ENCODE measurements at regions of chr7 and their contacts with region 1.

Region 1: DNA sequence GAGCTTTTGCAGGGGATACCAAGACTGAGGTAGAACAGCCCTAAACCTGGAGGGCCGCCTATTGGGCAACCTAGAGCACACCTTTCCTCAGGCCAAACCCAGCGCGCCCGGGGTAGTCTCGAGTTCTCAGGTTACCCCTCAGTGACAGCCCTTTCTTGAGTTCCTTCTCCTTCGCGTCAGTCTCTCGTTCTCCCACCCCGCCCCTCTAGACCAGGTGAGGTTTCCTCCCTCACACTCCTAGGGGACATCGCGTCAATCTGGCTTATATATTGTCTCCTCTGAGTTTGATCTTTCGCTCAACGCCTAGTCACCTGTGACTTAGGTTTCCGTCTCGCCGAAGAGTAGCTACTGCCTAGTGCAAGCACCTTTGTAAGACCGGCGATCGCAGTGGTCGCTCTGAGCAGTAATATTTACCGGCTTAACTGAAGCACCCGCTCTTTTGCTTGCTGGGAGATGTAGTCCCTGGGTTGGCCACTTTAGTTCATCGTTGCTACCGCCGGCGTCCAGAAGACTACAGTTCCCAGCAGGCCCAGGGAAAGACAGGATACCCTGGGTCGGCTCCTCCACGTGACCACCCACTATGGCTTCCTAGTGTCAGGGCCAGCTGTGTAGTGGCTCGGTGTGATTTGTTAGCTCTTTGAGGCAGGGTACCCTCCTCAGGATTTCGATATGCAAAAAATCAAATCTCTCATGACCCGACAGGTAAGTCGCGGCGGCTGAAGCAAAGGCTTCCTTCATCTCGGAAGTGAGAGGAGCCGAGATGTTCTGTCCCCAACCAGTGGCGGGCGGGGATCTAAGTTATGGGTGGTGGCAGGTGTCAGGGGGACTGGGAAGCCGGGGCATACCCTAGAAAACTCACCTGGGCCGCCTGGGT is at the start of gene VPS50:
- DNase-seq: peak; percentile 94 to 98 (median 97)
- H3K4me3 ChIP-seq: peak within 1 kb of the TSS; percentile 90 to 98 (median 96)
- H3K27ac ChIP-seq: peak within 1 kb of the TSS; percentile 25 to 70
- H3K4me1 ChIP-seq: peaks cover 9 to 15% (median 14%) of the 10 kb centered on the region in 4 experiments
- H3K27me3 ChIP-seq: no peaks in the 10 kb centered on the region

Region 2: DNA sequence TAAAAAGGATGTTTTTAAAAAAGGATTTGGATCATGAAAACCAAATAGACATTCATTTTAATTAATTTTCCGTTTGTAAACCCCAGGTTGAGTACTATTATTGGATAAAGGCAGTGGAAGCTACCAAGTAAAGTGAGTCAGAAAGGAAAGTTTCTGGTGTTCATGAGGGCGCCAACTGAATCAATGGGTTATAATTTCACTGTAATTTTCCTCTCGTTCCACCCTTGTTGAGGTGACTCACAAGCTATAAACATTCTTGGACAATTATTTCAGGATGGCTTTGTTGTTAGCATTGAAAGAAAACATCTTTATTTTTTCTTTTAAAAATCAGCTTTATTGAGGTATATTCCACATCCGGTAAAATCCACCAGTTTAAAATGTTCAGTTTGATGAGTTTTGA is 636.8 kb before region 1 on chr7:
- CTCF ChIA-PET with region 1: no interaction called
- POLR2A ChIA-PET with region 1: no interaction called
- DNase-seq: no peak
- H3K4me3 ChIP-seq: no peak overlapping the region
- H3K27ac ChIP-seq: no peak overlapping the region
- H3K4me1 ChIP-seq: peaks cover 0 to 7% (median 7%) of the 10 kb centered on the region in 4 experiments
- H3K27me3 ChIP-seq: no peaks in the 10 kb centered on the region

Region 3: DNA sequence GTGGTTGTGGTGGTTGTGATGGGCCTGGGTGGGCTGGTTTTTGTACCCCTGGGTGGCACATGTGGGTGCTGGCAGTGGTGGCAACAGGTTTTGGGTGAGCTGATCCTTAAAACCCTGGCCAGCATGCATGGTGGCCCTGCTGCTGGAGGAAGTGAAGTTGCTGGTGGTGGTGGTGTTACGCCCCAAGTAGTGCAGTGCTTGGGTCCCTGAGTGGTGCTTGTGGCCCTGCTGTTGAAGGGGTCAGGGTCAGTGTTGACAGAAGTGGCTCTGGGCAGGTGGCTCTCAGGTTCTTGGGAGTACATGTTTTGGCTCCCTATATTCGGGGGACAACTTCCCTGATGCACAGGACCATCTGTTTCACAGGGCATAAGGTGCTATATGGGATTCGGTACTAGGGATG is 145.3 kb before region 1 on chr7:
- CTCF ChIA-PET with region 1: no interaction called
- POLR2A ChIA-PET with region 1: no interaction called
- DNase-seq: no peak
- H3K4me3 ChIP-seq: no peak overlapping the region
- H3K27ac ChIP-seq: no peak overlapping the region
- H3K4me1 ChIP-seq: no peaks in the 10 kb centered on the region
- H3K27me3 ChIP-seq: no peaks in the 10 kb centered on the region

Region 4: DNA sequence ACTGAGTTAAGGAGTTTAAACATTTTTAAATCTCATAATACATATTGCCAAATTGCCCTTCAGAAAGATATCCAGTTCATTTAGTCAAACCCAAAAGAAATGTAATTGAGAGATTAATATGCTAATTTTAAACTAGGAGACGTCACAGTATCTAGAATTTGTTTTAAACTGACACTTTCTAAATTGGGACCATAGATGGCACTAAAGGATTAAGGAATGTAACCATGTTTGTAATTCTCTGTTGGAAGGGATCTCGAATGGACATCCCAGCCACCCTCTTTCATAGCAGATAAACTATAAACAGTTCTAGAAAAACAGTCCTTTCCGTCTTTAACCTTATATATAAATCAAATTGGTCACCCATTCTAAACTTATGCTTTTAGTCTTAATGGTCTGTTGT is 53.8 kb before region 1 on chr7:
- CTCF ChIA-PET with region 1: interaction called, 24 read pairs
- POLR2A ChIA-PET with region 1: interaction called, 3 read pairs
- DNase-seq: peak; percentile 43 to 68 (median 63)
- H3K4me3 ChIP-seq: no peak overlapping the region
- H3K27ac ChIP-seq: no peak overlapping the region
- H3K4me1 ChIP-seq: no peaks in the 10 kb centered on the region
- H3K27me3 ChIP-seq: peaks cover 0 to 3% (median 0%) of the 10 kb centered on the region in 5 experiments

Region 5: DNA sequence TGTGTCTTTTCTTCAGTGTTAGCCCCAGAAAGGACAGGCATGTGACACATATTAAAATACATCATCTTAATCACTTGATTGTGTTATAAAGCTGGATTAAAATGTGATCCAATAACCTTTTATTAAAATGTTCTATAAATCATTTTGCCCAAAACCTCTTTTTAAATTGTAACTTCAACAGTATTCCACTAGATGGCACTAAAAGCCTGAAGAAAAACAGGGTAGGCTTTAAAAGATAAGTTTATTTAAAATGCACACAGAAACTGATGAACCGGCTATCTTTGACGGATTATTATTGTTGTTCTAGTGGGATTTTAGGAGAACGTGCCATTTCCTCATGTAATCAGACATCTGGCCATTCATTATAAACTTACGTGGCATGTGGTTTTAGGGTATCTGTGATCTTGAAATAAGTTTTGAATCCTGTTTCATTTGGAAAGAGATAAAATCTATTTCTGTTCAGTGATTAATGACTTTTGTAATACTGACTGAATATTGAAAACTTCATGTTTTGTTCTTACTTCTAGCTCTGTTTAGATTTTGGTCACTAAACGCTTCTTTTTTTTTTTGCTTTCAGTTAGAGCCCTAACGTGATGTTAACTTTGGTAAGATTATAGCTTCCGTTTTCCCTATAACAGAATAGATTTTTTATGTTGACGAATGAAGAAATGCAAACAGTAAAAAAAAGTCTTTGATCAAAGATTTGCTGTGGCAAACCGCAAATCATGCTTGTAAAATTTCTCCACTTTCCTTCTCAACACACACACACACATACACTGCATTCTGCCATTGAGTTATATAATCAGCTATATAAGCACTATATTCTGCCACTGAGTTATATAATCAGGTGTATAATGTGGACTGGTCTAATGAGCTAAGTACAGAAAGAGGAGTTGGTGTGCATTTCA is 13.7 kb after region 1 on chr7:
- CTCF ChIA-PET with region 1: interaction called, 19 read pairs
- POLR2A ChIA-PET with region 1: no interaction called
- DNase-seq: peak; percentile 36 to 61 (median 52)
- H3K4me3 ChIP-seq: peak overlapping the region in 1 of 7 experiments; percentile 1
- H3K27ac ChIP-seq: no peak overlapping the region
- H3K4me1 ChIP-seq: peaks cover 0 to 2% (median 0%) of the 10 kb centered on the region in 4 experiments
- H3K27me3 ChIP-seq: no peaks in the 10 kb centered on the region

Measured in common myeloid progenitor, CD34-positive (primary cell).